Natural killer cell (primary cell): ENCODE measurements at regions of chr7 and their contacts with region 1.

Region 1: GRCh38 chr7:116122972-116123595 is 87.3 kb upstream of the TES start:
- DNase-seq: peak in 1 of 2 donors; percentile 33
- ATAC-seq: no peak
- H3K4me3 ChIP-seq: no peak overlapping the region
- H3K4me3 Mint-ChIP-seq: no peak overlapping the region
- H3K27ac ChIP-seq: no peak overlapping the region
- H3K27ac Mint-ChIP-seq: no peak overlapping the region
- H3K4me1 ChIP-seq: no peaks in the 10 kb centered on the region
- H3K4me1 Mint-ChIP-seq: no peaks in the 10 kb centered on the region
- H3K27me3 ChIP-seq: peaks cover 2% of the 10 kb centered on the region
- H3K27me3 Mint-ChIP-seq: peaks cover 6 to 8% of the 10 kb centered on the region in 2 donors
- CTCF ChIP-seq: no peak

Region 2: GRCh38 chr7:116097365-116098009 is 25.6 kb before region 1 on chr7:
- intact Hi-C with region 1: loop called (anchors 1 kb)
- DNase-seq: no peak
- ATAC-seq: no peak
- H3K4me3 ChIP-seq: no peak overlapping the region
- H3K4me3 Mint-ChIP-seq: no peak overlapping the region
- H3K27ac ChIP-seq: no peak overlapping the region
- H3K27ac Mint-ChIP-seq: no peak overlapping the region
- H3K4me1 ChIP-seq: no peaks in the 10 kb centered on the region
- H3K4me1 Mint-ChIP-seq: no peaks in the 10 kb centered on the region
- H3K27me3 ChIP-seq: no peaks in the 10 kb centered on the region
- H3K27me3 Mint-ChIP-seq: no peaks in the 10 kb centered on the region
- CTCF ChIP-seq: no peak